PC-9 (cell line): ENCODE measurements at regions of chr15 and their contacts with region 1.

Region 1: GRCh38 chr15:45279024-45279698 is 27.1 kb downstream of the SLC28A2 start:
- DNase-seq: peak; percentile 92 to 98
- H3K4me3 ChIP-seq: peak overlapping the region; percentile 67
- H3K27ac ChIP-seq: no peak overlapping the region
- H3K4me1 ChIP-seq: no peaks in the 10 kb centered on the region; the same call in 1 of the 2 replicates
- H3K27me3 ChIP-seq: no peaks in the 10 kb centered on the region
- CTCF ChIP-seq: no peak

Region 2: DNA sequence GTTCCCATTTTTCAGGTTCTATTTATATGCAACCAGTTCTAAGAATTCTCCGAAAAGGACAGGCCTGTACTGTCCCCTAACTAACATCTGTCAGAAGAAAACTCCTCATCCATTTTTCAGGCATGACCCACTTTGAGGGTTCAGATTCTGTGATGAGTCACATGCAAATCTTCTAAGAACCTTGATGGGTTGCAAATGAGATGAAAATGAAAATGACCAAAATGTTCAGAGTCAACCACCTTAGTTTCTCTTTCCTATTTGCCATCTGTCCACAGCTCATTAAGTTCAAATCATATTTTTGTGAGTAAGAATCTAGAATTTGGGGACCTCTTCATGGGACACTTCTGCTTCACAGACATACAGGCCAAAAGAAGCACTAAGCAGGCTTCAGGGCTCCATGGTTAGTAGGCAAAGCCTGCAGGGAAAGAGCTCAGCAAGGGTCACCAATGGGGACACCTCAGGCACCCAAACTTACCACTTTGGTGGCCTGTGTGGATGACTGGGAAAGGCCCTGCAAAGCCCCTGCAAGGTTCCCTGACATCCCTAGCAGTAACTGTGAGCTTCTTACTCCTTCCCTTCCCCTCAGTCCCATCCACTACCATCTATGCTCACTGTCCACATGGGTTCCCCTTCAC is 1330.4 kb before region 1 on chr15:
- CTCF ChIA-PET with region 1: no interaction called
- POLR2A ChIA-PET with region 1: no interaction called
- intact Hi-C with region 1: no loop called
- DNase-seq: no peak
- H3K4me3 ChIP-seq: no peak overlapping the region
- H3K27ac ChIP-seq: no peak overlapping the region
- H3K4me1 ChIP-seq: no peaks in the 10 kb centered on the region
- H3K27me3 ChIP-seq: no peaks in the 10 kb centered on the region
- CTCF ChIP-seq: no peak

Region 3: GRCh38 chr15:45126535-45127158 is 152.5 kb before region 1 on chr15:
- CTCF ChIA-PET with region 1: no interaction called
- POLR2A ChIA-PET with region 1: no interaction called
- intact Hi-C with region 1: loop called (anchors 2 kb)
- DNase-seq: peak in 1 of 2 experiments; percentile 45
- H3K4me3 ChIP-seq: no peak overlapping the region
- H3K27ac ChIP-seq: no peak overlapping the region
- H3K4me1 ChIP-seq: peaks cover 11% of the 10 kb centered on the region; the same call in 1 of the 2 replicates
- H3K27me3 ChIP-seq: no peaks in the 10 kb centered on the region
- CTCF ChIP-seq: peak; percentile 78